Heart right ventricle (tissue), 16 donors: ENCODE measurements at regions of chr6 and their contacts with region 1.

Region 1: DNA sequence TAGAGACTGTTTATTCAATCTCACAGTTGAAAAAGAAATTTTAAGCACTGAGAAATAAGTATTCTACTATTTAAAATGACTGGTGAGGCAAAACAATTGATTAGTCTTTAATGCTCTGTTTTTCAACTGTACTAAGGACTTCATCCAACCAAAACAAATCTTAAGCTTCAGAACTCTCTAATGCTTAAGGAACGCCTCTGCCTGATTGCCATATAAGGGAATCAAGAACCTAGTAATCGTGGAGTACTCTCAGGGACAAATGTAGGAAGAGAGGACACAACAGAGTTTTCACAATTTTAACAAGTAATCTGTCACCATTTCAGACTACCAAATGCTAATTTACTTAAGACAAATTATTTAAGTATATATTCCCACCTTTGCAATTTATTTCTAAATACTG is 16.1 kb downstream of the FBXO30 start:
- DNase-seq: no peak
- ATAC-seq: peak in 3 of 8 donors; percentile 48 to 57 (median 52)
- H3K4me3 ChIP-seq: no peak overlapping the region
- H3K27ac ChIP-seq: no peak overlapping the region
- H3K4me1 ChIP-seq: peaks cover 0 to 53% (median 10%) of the 10 kb centered on the region in 9 donors
- H3K27me3 ChIP-seq: no peaks in the 10 kb centered on the region
- CTCF ChIP-seq: no peak

Region 2: GRCh38 chr6:145643760-145644159 is 154.8 kb before region 1 on chr6:
- intact Hi-C with region 1: no loop called
- DNase-seq: no peak
- ATAC-seq: no peak
- H3K4me3 ChIP-seq: no peak overlapping the region
- H3K27ac ChIP-seq: no peak overlapping the region
- H3K4me1 ChIP-seq: no peaks in the 10 kb centered on the region
- H3K27me3 ChIP-seq: no peaks in the 10 kb centered on the region
- CTCF ChIP-seq: no peak

Region 3: DNA sequence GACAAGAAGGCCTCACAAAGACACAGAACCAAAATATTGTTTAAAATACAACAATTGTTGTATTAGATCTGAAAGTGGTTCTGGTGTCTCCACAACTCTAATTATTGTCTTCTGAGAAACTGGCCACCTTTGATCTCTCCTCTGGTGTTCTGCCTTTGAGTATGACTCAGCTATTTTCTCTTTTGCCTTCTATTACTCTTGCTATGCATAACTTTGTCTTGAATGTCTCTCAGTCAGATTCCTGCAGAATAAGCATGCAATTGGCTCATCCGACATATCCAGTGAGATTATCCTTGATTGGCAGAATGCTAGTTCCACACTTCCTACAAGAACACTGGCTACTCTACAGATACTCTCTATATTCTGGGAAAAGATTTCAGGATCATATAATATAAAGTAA is 48.9 kb before region 1 on chr6:
- intact Hi-C with region 1: loop called in 1 of 10 experiments (anchors 10 kb)
- DNase-seq: no peak
- ATAC-seq: peak in 1 of 8 donors; percentile 50
- H3K4me3 ChIP-seq: no peak overlapping the region
- H3K27ac ChIP-seq: no peak overlapping the region
- H3K4me1 ChIP-seq: peaks cover 0 to 9% (median 0%) of the 10 kb centered on the region in 9 donors
- H3K27me3 ChIP-seq: no peaks in the 10 kb centered on the region
- CTCF ChIP-seq: no peak

Region 4: DNA sequence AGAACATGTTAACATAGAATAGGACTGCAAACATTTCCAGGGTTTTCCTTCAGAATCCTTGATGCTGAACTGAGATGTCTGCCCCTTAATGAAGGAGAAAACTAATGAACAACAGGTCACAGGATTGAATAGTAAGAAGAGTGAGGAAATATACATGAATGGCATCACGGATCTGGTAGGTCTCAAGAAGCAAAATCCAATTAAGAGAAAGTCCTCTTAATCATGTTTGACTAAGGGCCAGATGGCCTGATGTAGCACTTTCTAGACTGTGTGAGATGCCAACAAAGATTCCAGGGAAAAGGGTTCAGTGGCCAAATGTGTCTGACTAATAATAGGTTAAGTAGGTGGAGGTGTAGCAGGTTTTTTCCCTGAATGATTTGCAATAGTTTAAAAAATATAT is 179.4 kb after region 1 on chr6:
- intact Hi-C with region 1: no loop called
- DNase-seq: no peak
- ATAC-seq: no peak
- H3K4me3 ChIP-seq: no peak overlapping the region
- H3K27ac ChIP-seq: no peak overlapping the region
- H3K4me1 ChIP-seq: no peaks in the 10 kb centered on the region
- H3K27me3 ChIP-seq: no peaks in the 10 kb centered on the region
- CTCF ChIP-seq: no peak